GM23248 (cell line): ENCODE measurements at regions of chr9 and their contacts with region 1.

Region 1: DNA sequence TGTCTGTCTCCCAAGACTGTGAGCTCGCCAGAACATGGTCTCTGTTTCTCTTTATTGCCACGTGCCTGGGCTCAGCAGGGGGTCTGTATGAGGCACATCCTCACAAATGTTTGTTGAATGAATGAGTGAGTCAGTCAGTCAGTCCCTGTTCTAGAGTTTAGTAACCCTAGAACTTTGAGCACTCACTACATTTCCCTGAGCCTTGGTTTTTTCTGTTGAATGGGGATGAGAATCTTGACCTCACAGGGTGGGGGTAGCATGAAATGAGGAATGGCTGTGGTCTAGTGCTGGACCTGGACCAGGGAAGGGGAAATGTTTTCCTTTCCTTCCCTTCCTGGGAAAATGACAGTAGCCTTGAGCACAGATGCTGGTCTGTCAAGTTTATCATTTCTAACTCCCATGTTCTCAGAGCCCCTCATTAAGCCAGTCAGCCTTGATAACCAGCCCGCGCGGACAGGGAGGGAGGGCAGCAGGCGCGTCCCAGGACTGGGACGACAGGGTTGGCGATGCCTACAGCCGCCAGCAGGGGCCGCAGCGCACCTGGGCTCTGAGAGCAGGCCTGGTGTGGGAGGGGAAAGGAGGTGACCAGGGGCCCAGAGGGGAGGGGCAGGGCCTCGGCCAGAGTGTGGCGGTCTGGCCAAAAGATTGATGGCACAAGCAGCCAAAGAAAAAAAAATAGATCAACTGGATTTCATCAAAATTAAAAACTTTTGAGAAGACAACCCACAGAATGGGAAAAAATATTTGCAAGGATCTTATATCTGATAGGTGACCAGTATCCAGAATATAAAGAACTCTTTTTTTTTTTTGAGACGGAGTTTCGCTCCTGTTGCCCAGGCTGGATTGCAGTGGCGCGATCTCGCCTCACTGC is 24.1 kb upstream of the WNK2 start:
- DNase-seq: peak; percentile 79
- H3K4me3 ChIP-seq: no peak overlapping the region
- H3K27ac ChIP-seq: no peak overlapping the region
- H3K4me1 ChIP-seq: no peaks in the 10 kb centered on the region
- H3K27me3 ChIP-seq: peaks cover 7% of the 10 kb centered on the region; the same call in 1 of the 2 replicates

Region 2: DNA sequence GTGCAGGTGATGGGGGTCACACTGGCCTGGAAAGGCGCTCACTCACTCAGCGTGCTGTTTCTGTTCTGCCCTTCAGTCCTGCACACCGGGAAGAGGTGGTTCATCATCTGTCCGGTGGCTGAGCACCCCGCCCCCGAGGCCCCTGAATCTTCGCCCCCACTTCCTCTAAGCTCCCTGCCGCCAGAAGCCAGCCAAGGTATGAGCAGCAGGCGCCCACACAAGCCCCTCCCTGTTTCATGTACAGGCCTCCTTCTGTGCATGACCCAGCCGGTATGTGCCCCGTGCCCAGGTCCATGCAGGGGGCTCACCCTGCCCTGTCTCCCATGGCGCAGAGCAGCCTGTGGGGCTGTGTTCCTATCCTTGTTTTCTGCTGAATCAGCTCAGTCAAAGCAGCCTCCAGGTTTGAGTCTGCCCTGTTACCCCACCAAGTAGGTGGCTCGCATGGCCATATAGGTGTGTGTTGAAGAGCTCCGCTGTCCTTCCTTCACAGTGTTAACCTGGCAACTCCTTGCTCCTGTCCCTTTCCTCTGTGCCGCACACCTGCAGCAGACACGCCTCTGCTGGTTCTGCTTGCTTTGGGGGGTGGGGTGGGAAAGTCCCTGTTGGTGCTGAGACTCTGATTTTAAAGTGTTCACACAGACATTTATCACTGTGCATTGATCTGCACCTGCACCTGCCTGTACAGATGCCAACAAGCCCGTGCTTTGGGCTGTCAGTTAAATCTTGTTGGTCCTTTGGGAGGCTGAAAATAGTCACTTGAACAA is 108.9 kb after region 1 on chr9:
- in situ Hi-C with region 1: no loop called
- DNase-seq: no peak
- H3K4me3 ChIP-seq: no peak overlapping the region
- H3K27ac ChIP-seq: no peak overlapping the region
- H3K4me1 ChIP-seq: no peaks in the 10 kb centered on the region
- H3K27me3 ChIP-seq: no peaks in the 10 kb centered on the region

Region 3: GRCh38 chr9:93302551-93303257 is 142.9 kb after region 1 on chr9:
- in situ Hi-C with region 1: loop called (anchors 10 kb)
- DNase-seq: peak; percentile 72
- H3K4me3 ChIP-seq: no peak overlapping the region
- H3K27ac ChIP-seq: no peak overlapping the region
- H3K4me1 ChIP-seq: no peaks in the 10 kb centered on the region
- H3K27me3 ChIP-seq: no peaks in the 10 kb centered on the region

Region 4: GRCh38 chr9:93566408-93567270 is 406.8 kb after region 1 on chr9:
- in situ Hi-C with region 1: loop called (anchors 25 kb)
- DNase-seq: peak; percentile 99
- H3K4me3 ChIP-seq: peak overlapping the region; percentile 75
- H3K27ac ChIP-seq: peak overlapping the region; percentile 83
- H3K4me1 ChIP-seq: peaks cover 15% of the 10 kb centered on the region
- H3K27me3 ChIP-seq: no peaks in the 10 kb centered on the region